IMR-90 (cell line): ENCODE measurements at regions of chrX and their contacts with region 1.

Region 1: GRCh38 chrX:125673758-125674157 is 354.1 kb downstream of the TEX13C start:
- DNase-seq: no peak
- ATAC-seq: no peak
- H3K4me3 ChIP-seq: no peak overlapping the region
- H3K27ac ChIP-seq: no peak overlapping the region
- H3K4me1 ChIP-seq: no peaks in the 10 kb centered on the region
- H3K27me3 ChIP-seq: no peaks in the 10 kb centered on the region
- CTCF ChIP-seq: no peak
- POLR2A ChIP-seq: no peak
- RAD21 ChIP-seq: no peak

Region 2: GRCh38 chrX:125646195-125646594 is 27.6 kb before region 1 on chrX:
- CTCF ChIA-PET with region 1: no interaction called
- POLR2A ChIA-PET with region 1: no interaction called
- dilution Hi-C with region 1: no loop called
- in situ Hi-C with region 1: no loop called
- intact Hi-C with region 1: loop called (anchors 2 kb)
- DNase-seq: no peak
- ATAC-seq: no peak
- H3K4me3 ChIP-seq: no peak overlapping the region
- H3K27ac ChIP-seq: no peak overlapping the region
- H3K4me1 ChIP-seq: no peaks in the 10 kb centered on the region
- H3K27me3 ChIP-seq: no peaks in the 10 kb centered on the region
- CTCF ChIP-seq: no peak
- POLR2A ChIP-seq: no peak
- RAD21 ChIP-seq: no peak